Naive thymus-derived CD4-positive, alpha-beta T cell (primary cell): ENCODE measurements at regions of chr17 and their contacts with region 1.

Region 1: DNA sequence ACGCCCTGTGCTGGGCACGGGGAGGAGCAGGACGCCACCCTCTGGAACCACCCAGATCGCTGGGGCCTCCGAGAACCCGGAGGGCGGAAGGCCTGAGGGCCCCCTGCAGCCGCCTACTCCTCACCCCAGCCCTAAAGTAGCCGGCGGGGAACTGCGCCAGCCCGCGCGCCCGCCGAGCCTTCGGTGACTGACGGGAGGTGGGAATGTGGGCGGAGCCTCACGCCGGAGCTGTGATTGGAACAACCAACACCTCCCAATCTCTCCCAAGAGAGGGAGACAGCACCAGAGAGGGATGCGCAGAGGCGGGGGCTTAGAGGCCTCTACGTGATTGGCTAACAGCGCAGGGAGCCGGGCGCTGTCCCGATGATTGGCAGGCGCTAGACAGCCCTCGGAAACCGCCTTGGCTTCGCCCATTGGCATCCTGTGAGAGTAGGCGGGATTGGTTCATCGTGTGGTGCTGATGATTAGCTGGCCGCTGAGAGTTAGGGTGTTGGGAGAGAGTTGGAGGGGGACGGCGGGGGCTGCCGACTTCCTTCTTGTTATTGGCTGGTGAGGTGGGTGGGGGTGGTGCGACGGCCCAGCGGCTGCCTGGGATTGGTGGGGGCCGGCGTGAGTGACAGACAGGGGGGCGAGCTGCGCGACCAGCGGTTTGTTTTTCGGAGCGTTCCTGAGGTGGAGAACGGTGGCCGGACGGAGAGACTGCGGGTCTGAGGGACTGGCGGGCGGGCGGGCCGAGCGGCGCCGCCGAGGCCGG is at the start of gene MAP3K3:
- DNase-seq: peak; percentile 79 to 99 (median 98)
- ATAC-seq: peak; percentile 93
- H3K4me3 ChIP-seq: peak within 1 kb of the TSS; percentile 82
- H3K4me3 Mint-ChIP-seq: peak within 1 kb of the TSS; percentile 96 to 100 (median 99)
- H3K27ac ChIP-seq: peak within 1 kb of the TSS; percentile 75
- H3K27ac Mint-ChIP-seq: peak within 1 kb of the TSS; percentile 83 to 97 (median 95)
- H3K4me1 ChIP-seq: peaks cover 21 to 31% of the 10 kb centered on the region in 2 donors
- H3K4me1 Mint-ChIP-seq: peaks cover 34 to 48% (median 42%) of the 10 kb centered on the region in 7 donors
- H3K27me3 ChIP-seq: peaks cover 0 to 3% of the 10 kb centered on the region in 2 donors
- H3K27me3 Mint-ChIP-seq: peaks cover 0 to 12% (median 0%) of the 10 kb centered on the region in 5 donors
- total RNA-seq, gene MAP3K3: 37.5 to 105 (median 85.5) TPM

Region 2: GRCh38 chr17:63600569-63601438 is 21.1 kb before region 1 on chr17 and contains the start of gene TACO1:
- CTCF ChIA-PET with region 1: no interaction called
- POLR2A ChIA-PET with region 1: interaction called, 15 read pairs
- intact Hi-C with region 1: loop called (anchors 1 kb)
- DNase-seq: peak; percentile 54 to 83 (median 71)
- ATAC-seq: peak; percentile 96
- H3K4me3 ChIP-seq: peak within 1 kb of the TSS; percentile 68
- H3K4me3 Mint-ChIP-seq: peak within 1 kb of the TSS; percentile 92 to 97 (median 95)
- H3K27ac ChIP-seq: peak within 1 kb of the TSS; percentile 86
- H3K27ac Mint-ChIP-seq: peak within 1 kb of the TSS; percentile 93 to 98 (median 97)
- H3K4me1 ChIP-seq: peaks cover 17 to 34% of the 10 kb centered on the region in 2 donors
- H3K4me1 Mint-ChIP-seq: peaks cover 19 to 38% (median 25%) of the 10 kb centered on the region in 7 donors
- H3K27me3 ChIP-seq: no peaks in the 10 kb centered on the region
- H3K27me3 Mint-ChIP-seq: no peaks in the 10 kb centered on the region
- total RNA-seq, gene TACO1: 11.1 to 20.3 (median 15.2) TPM

Region 3: DNA sequence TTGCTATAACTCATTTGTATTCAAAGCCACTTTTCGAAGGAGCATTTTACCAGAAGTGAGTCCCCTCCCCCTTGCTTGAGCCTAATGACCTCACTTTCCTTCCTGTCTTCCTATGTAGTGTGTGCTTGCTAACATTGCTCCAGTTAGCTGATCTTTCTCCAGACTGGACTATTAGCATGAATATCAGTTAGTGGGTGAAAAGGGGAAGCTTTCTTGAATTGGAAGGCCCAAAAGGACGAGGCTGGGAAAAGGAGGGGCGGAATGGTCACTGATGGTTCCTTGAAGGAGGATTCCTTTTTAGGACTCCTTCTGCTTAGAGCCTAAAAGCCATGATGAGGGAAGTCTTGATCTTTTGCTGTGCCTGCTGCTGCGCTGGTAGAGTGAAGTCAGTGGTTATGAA is 12.2 kb after region 1 on chr17:
- CTCF ChIA-PET with region 1: no interaction called
- POLR2A ChIA-PET with region 1: interaction called, 18 read pairs
- intact Hi-C with region 1: no loop called
- DNase-seq: no peak
- ATAC-seq: peak; percentile 31
- H3K4me3 ChIP-seq: no peak overlapping the region
- H3K4me3 Mint-ChIP-seq: peak overlapping the region in 1 of 10 donors; percentile 36
- H3K27ac ChIP-seq: peak overlapping the region; percentile 9
- H3K27ac Mint-ChIP-seq: peak overlapping the region in 8 of 9 donors; percentile 5 to 75 (median 48)
- H3K4me1 ChIP-seq: peaks cover 0 to 8% of the 10 kb centered on the region in 2 donors
- H3K4me1 Mint-ChIP-seq: peaks cover 23 to 64% (median 54%) of the 10 kb centered on the region in 7 donors
- H3K27me3 ChIP-seq: no peaks in the 10 kb centered on the region
- H3K27me3 Mint-ChIP-seq: no peaks in the 10 kb centered on the region

Region 4: GRCh38 chr17:63714547-63715277 is 92.8 kb after region 1 on chr17:
- CTCF ChIA-PET with region 1: interaction called, 5 read pairs
- POLR2A ChIA-PET with region 1: interaction called, 10 read pairs
- intact Hi-C with region 1: loop called in 1 of 2 experiments (anchors 1 kb)
- DNase-seq: no peak
- ATAC-seq: no peak
- H3K4me3 ChIP-seq: no peak overlapping the region
- H3K4me3 Mint-ChIP-seq: no peak overlapping the region
- H3K27ac ChIP-seq: no peak overlapping the region
- H3K27ac Mint-ChIP-seq: peak overlapping the region in 3 of 9 donors; percentile 41 to 76 (median 62)
- H3K4me1 ChIP-seq: peaks cover 4 to 11% of the 10 kb centered on the region in 2 donors
- H3K4me1 Mint-ChIP-seq: peaks cover 7 to 21% (median 15%) of the 10 kb centered on the region in 7 donors
- H3K27me3 ChIP-seq: no peaks in the 10 kb centered on the region
- H3K27me3 Mint-ChIP-seq: no peaks in the 10 kb centered on the region

Region 5: DNA sequence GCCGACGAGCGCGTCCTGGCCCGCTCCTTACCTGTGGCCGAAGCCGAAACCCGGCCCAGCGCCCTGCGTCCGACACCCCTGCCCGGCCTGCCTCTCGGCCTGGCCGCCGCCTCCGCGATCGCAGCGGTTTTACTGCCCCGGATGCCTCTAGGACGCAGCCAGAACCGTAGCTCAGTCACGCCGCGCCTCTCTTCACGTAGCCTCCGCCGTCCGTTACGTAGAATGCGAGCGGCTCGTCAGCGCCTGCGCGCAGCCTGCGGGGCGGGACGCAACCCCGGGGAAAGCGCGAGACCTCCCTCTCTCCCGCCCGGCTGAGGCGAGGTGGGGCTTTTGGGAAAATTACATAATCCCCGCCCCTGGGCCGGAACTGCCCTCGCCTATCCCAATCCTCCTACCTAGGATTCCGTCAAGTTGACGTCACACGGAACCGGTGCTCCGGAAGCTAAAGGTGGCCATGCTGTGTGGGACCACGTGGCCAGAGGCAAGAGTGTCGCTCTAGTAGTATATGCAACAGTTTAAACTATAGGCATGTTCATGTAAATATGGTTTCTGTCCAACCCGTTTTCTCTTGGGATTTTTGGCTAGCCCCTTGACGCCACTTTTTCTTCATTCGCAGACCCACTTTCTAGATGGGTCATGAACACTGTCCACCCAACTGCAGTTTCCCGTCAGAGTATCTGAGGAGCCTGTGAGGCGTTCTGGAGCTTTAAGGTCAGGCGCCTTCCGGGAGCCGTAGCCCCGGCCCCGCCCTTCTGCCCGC is 151.6 kb after region 1 on chr17 and contains the start of gene CCDC47:
- CTCF ChIA-PET with region 1: no interaction called
- POLR2A ChIA-PET with region 1: interaction called, 5 read pairs
- intact Hi-C with region 1: loop called (anchors 1 kb)
- DNase-seq: peak; percentile 92 to 99 (median 99)
- ATAC-seq: peak; percentile 88
- H3K4me3 ChIP-seq: peak within 1 kb of the TSS; percentile 85
- H3K4me3 Mint-ChIP-seq: peak within 1 kb of the TSS; percentile 91 to 99 (median 98)
- H3K27ac ChIP-seq: peak within 1 kb of the TSS; percentile 100
- H3K27ac Mint-ChIP-seq: peak within 1 kb of the TSS; percentile 97 to 100 (median 99)
- H3K4me1 ChIP-seq: peaks cover 21 to 46% of the 10 kb centered on the region in 2 donors
- H3K4me1 Mint-ChIP-seq: peaks cover 31 to 84% (median 62%) of the 10 kb centered on the region in 7 donors
- H3K27me3 ChIP-seq: no peaks in the 10 kb centered on the region
- H3K27me3 Mint-ChIP-seq: peaks cover 0 to 7% (median 0%) of the 10 kb centered on the region in 5 donors
- total RNA-seq, gene CCDC47: 31.8 to 62.9 (median 34.7) TPM

Region 6: DNA sequence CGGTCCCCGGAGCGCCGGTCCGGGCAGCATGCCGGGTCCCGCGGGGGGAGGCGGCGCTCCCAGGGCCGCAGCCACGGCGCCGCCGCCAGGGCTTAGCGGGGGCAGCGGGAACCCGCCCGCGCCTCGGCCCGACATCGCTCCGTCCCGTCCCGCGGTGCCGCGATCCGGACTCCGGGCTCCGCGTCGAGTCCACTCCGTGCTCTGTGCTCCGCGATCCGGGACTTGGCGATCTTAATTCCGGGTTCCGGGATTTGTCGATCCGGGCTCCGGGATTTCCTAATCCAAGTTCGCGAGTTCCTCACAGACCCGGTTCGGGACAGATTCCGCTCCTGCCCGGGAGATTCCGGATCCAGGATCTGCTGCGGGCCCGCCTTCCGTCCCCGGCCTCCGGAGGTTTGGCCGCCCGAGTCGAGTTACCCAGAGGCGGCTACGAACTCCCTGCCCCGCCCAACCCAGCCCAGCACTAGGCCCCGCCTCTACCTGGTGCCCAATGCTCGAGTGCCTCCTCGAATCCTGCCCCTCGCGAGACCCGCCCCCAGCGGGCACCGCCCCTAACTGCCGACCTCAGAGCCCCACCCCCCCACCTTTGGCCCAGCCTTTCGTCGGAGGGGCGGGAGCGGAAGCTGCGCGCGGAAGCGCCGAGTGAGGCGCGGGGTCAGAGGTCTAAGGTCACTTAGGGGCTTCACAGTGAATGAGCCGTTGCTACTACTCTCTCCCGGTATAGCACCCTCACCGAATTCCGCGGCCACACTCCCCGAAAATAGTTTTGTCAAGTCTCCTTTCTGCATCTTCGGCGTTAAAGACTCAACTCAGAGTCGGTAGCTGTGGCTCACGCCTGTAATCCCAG is 220.8 kb after region 1 on chr17 and contains the start of gene SMARCD2:
- CTCF ChIA-PET with region 1: no interaction called
- POLR2A ChIA-PET with region 1: no interaction called
- intact Hi-C with region 1: loop called (anchors 1 kb)
- DNase-seq: peak; percentile 94 to 99 (median 98)
- ATAC-seq: peak; percentile 96
- H3K4me3 ChIP-seq: peak within 1 kb of the TSS; percentile 87
- H3K4me3 Mint-ChIP-seq: peak within 1 kb of the TSS; percentile 92 to 98 (median 95)
- H3K27ac ChIP-seq: peak within 1 kb of the TSS; percentile 96
- H3K27ac Mint-ChIP-seq: peak within 1 kb of the TSS; percentile 87 to 95 (median 92)
- H3K4me1 ChIP-seq: peaks cover 34 to 36% of the 10 kb centered on the region in 2 donors
- H3K4me1 Mint-ChIP-seq: peaks cover 27 to 52% (median 44%) of the 10 kb centered on the region in 7 donors
- H3K27me3 ChIP-seq: no peaks in the 10 kb centered on the region
- H3K27me3 Mint-ChIP-seq: no peaks in the 10 kb centered on the region
- total RNA-seq, gene SMARCD2: 102 to 148 (median 109) TPM